ENCODE measurements at regions of chr2 and their contacts with region 1.

Region 1: DNA sequence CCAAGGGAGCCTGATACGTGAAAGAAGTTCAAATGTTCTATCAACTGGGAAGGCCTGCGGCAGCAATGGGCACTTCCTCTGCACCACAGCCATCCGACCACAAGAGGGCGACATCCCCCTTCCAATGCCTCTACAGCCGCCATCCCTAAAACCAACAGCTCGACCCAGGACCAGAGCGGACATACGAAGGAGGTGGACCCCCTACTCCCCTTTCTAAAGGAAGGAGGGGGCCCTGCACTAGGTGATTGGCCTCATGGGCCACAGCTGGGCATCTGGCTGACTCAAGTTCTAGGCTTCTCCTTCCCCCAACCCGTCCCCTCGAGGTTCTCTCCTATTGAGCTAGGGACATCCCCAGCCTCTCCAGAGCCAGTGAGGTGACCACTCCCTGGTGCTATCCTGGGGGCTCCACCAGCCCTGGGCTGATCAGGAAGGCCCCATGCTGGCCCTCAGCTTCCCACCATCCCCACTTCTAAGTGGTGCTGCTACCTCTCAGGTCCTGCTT is 217.2 kb downstream of the TNS1 start:
- DNase-seq: peak; percentile 84
- CTCF ChIP-seq: peak; percentile 96

Region 2: GRCh38 chr2:217740178-217740577 is 45.4 kb before region 1 on chr2:
- CTCF ChIA-PET with region 1: no interaction called
- POLR2A ChIA-PET with region 1: no interaction called
- DNase-seq: no peak
- CTCF ChIP-seq: no peak

Region 3: DNA sequence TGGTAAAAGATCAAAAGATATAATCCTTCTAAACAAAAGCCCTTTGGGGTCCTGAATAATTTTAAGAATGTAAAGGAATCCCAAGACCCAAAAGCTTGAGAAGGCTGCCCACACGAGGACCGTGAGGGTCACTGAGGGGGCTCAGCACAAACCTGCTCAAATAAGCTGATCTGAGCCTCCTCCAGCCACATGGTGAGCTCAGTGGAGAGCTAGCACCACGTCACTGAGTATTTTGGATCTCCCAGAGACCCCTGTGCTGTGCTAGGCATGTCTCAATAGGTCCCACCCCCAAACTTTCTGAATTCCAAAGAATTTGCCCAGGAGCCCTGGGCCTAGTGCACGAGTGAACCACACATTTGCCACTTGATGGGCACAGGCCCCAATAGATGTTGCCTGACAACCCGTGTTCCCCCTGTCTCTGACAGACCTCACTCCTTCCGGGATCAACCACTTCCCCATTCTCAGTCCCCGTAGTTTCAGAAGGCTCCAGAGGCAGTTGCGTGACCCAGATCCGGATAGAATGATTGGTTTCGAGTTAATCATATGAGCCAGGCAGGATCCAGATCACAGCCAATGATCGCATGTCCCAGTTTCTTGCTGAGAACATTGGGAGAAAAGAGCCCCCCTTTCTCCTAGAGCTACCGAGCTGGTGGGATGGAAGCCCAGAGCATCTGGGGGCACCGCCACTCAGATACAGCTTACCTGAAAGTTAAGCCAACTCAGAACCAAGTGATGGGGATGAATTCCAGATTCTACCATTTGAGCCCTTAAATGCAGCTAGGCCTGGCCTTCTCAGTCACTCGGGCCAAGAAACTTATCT is 13.4 kb after region 1 on chr2:
- CTCF ChIA-PET with region 1: interaction called, 76 read pairs
- POLR2A ChIA-PET with region 1: no interaction called
- DNase-seq: no peak
- CTCF ChIP-seq: no peak

Region 4: GRCh38 chr2:217899231-217900009 is 113.8 kb after region 1 on chr2:
- CTCF ChIA-PET with region 1: interaction called, 314 read pairs
- POLR2A ChIA-PET with region 1: no interaction called
- DNase-seq: peak; percentile 75
- CTCF ChIP-seq: peak; percentile 31

Region 5: DNA sequence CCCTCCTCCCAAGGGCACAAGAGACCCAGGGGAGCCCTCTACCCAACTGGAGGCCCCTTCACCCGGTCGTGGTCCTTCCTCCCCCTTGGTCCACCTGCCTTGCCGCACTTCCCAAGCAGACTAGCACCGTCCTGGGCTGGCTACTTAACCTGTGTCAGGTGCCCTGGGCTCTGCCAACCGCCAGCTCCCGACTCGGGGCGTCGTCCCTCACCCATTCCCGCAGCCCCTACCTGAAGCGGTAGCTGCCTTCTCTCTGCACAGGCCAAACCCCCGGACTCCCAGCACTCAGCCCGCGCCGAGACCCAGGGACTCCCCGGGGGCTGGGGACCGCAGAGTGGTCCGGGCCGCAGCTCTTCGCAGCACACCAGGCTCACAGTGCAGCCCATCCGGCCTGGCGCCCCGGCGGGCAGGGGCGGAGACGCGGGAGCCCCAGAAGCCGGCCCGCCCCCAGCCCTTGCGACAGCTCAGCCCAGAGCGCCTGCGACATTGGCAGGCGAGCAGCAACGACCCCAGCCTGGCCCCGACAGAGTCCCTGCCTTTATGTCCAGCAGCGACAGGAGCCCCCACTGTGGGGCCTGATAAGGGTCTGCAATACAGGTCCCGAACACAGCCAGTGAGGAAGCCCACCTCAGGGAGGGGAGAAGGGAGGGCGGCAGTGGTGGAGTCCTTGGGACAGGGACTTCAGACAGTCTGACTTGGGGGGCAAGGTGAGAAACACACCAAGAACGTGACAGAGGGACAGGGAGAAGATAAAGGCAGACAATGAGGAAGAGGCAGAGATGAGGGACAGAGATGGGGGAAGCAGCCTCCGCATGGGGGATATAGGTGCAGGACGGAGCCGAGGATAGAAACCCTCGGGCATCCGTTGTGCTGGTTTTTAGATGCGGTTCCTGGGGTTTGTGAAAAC is 248.2 kb after region 1 on chr2:
- CTCF ChIA-PET with region 1: interaction called, 39 read pairs
- POLR2A ChIA-PET with region 1: no interaction called
- DNase-seq: peak; percentile 18
- CTCF ChIP-seq: no peak

Region 6: GRCh38 chr2:218066926-218067515 is 281.4 kb after region 1 on chr2:
- CTCF ChIA-PET with region 1: interaction called, 52 read pairs
- POLR2A ChIA-PET with region 1: no interaction called
- DNase-seq: no peak
- CTCF ChIP-seq: no peak